ENCODE measurements at regions of chrX and their contacts with region 1.

Region 1: GRCh38 chrX:68710870-68711576 is 63.6 kb downstream of the STARD8 start:
- DNase-seq: peak; percentile 68
- H3K4me3 Mint-ChIP-seq: no peak overlapping the region
- H3K27ac Mint-ChIP-seq: no peak overlapping the region
- H3K4me1 Mint-ChIP-seq: no peaks in the 10 kb centered on the region
- H3K27me3 Mint-ChIP-seq: no peaks in the 10 kb centered on the region

Region 2: DNA sequence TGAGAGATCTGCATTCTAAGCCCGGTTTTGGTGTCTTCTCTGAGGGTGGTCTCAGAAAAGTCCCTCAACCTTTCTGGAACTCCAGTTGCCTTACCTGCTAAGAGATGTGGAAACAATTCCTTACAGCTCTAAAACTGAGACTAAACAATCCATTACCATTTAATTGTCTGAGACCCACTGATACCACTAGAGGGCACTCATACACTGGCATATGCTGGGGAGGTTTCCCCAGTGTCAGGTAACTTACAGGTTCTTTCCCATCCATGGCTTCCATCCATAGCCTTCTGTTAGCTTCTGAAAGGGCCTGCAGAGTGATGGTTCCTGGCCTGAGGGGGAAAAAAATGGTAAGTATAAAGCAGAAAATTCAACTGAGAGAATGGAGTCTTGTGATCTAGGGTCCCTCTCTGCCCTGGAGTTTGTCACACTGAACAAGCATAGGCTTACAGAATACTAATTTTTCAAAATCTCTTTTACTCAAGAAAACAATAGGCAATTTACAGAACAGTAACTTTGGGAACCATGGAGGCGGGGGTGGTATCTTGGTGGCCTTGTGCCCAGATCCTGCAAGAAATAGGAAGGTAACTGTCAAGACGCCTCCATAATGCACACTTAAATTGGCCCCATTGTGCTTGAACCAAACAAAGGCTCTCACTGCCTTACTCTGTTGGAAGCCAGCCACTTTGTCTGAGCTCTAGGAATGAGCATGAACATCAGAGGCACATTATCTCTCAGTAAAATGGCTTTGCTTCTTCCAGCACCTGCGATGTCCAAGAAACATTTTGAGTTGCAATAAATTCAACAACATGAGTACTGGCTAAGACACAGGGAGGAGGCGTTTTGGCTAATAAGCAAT is 513.9 kb before region 1 on chrX:
- intact Hi-C with region 1: loop called (anchors 2 kb)
- DNase-seq: peak; percentile 68
- H3K4me3 Mint-ChIP-seq: no peak overlapping the region
- H3K27ac Mint-ChIP-seq: no peak overlapping the region
- H3K4me1 Mint-ChIP-seq: no peaks in the 10 kb centered on the region
- H3K27me3 Mint-ChIP-seq: no peaks in the 10 kb centered on the region

Region 3: GRCh38 chrX:68511255-68511654 is 199.8 kb before region 1 on chrX:
- intact Hi-C with region 1: loop called (anchors 1 kb)
- DNase-seq: peak; percentile 80
- H3K4me3 Mint-ChIP-seq: no peak overlapping the region
- H3K27ac Mint-ChIP-seq: no peak overlapping the region
- H3K4me1 Mint-ChIP-seq: peaks cover 14% of the 10 kb centered on the region
- H3K27me3 Mint-ChIP-seq: no peaks in the 10 kb centered on the region

Measured in activated CD4-positive, alpha-beta T cell treated with anti-CD3 and anti-CD28 coated beads, Interleukin-2, amount 10 ng/mL, durations not matched to agents 24 days and 14 days (primary cell).